ENCODE measurements at regions of chr17 and their contacts with region 1.

Region 1: DNA sequence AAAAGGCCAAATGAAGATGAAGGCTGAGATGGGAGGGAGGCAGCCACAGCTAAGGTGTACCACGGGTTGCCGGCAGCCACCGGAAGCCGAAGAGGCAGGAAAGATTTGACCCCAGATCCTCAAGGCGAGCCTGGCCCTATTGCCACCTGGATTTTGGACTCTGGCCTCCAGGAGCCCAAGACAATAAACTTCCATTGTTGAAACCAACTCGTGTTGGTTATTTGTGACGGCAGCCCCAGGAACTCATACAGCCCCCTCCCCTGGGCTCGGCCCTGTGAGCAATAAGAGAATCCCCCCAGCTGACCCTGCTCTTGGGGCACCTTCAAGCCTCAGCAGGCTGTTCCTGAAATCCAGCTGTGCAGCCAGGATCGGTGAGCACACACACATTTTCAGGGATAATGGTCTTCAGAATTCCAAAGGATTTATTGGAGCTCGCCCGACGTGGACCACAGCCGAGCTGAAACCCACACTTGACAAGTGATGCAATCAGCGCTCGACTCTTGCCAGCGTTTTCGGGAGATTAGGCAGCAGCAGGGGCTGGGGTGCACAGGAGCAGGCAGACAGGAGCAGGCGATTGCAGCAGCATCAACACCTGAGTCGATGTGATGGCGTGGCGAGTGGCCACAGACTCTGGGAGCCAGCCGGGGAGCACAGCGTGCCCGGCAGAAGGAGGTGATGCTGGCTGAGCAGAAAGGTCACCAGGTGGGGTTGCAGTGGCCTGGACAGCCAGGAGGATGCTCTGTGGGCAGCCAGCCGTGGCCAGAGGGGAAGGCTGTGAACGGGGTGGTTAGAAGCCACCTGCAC is 22.4 kb upstream of the CBX4 start:
- DNase-seq: no peak
- ATAC-seq: peak in 1 of 2 experiments; percentile 13; a peak in 1 of 6 replicates
- H3K4me3 ChIP-seq: no peak overlapping the region
- H3K27ac ChIP-seq: no peak overlapping the region
- H3K4me1 ChIP-seq: no peaks in the 10 kb centered on the region
- CTCF ChIP-seq: no peak
- EP300 ChIP-seq: no peak
- POLR2A ChIP-seq: no peak
- RAD21 ChIP-seq: no peak

Region 2: GRCh38 chr17:79874329-79874981 is 12.8 kb after region 1 on chr17:
- CTCF ChIA-PET with region 1: interaction called, 12 read pairs
- POLR2A ChIA-PET with region 1: no interaction called
- DNase-seq: peak; percentile 72 to 95
- ATAC-seq: peak; percentile 81 to 91
- H3K4me3 ChIP-seq: no peak overlapping the region
- H3K27ac ChIP-seq: no peak overlapping the region
- H3K4me1 ChIP-seq: no peaks in the 10 kb centered on the region
- CTCF ChIP-seq: peak; percentile 55
- EP300 ChIP-seq: no peak
- POLR2A ChIP-seq: no peak
- RAD21 ChIP-seq: peak in 1 of 2 experiments; percentile 19; a peak in 1 of 5 replicates